ENCODE measurements at regions of chr17 and their contacts with region 1.

Region 1: DNA sequence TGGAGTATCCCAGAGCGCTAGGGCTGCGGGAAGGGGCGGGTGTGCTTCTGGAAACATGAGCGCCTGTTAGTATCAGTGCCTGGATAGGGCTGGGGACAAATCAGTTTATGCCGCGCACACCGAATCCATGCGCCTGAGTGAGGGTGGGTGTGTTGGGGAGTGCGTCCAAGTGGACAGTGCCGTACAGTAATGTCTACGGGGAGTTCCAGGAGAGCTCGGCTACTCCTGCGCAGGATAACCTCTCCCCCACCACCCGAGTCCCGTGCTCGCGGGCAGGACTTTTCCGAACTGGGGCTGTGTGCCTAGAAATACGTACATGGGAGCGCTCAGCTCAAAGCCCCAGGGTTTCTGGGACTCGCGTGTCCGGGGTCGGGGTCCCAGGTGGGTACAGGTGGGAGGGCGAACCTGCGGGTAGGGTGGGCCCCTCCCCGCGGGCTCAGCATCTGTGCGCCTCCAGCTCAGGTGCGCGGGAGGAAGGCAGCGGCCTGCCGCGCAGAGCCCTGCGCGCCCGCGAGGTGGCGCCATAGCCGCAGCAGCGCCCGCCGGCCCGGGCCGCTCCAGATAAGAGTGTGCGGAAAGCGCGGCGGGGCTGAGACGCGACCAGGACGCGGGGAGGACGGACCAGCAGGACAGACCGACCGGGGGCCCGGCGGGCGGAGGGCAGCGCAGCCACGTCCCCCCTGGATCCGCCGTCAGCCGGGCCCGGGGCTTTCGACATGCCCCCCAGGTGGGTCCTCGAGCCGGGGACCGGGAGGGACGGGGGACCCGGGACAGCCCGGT is at the start of gene HIC1:
- DNase-seq: peak; percentile 73
- ATAC-seq: peak; percentile 51
- H3K4me3 ChIP-seq: peak within 1 kb of the TSS; percentile 75
- H3K27ac ChIP-seq: peak within 1 kb of the TSS; percentile 98
- H3K4me1 ChIP-seq: peaks cover 18% of the 10 kb centered on the region
- H3K27me3 ChIP-seq: no peaks in the 10 kb centered on the region
- CTCF ChIP-seq: peak; percentile 93
- POLR2A ChIP-seq: peak; percentile 98
- RAD21 ChIP-seq: peak; percentile 89
- total RNA-seq, gene HIC1: 10.0 and 10.4 TPM in 2 replicates

Region 2: DNA sequence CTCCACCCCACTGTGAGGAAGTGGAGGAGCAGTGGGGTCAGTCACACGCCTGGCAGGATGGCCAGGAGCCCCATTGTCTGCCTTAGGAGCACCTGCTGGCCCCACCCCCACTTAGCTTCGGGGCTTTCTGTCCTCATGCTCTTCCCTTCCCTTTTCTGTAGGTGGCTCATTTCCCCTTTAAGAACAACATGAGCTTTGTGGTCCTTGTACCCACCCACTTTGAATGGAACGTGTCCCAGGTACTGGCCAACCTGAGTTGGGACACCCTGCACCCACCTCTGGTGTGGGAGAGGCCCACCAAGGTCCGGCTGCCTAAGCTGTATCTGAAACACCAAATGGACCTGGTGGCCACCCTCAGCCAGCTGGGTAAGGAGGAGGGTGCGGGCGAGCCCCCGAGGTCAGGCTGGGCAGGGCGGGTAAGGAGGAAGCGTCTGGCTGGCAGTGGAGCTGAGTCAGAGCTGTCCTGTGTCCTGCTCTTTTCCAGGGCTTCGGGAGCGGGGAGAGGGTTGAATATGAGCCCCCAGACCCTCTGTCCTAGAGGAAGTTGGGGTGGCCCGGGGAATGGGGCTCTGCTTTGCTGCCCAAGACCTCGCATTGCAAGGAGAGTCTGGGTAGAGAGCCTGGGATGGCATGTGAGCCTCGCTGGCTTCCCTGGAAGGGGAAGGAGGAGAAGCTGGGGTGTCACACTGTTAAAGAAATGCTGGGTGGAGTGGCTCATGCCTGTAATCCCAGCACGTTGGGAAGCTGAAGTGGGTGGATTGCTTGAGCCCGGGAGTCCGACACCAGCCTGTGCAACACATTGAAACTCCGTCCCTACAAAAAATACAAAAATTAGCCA is 302.1 kb before region 1 on chr17:
- CTCF ChIA-PET with region 1: no interaction called
- POLR2A ChIA-PET with region 1: no interaction called
- dilution Hi-C with region 1: no loop called
- in situ Hi-C with region 1: no loop called
- intact Hi-C with region 1: no loop called
- DNase-seq: no peak
- ATAC-seq: no peak
- H3K4me3 ChIP-seq: no peak overlapping the region
- H3K27ac ChIP-seq: no peak overlapping the region
- H3K4me1 ChIP-seq: no peaks in the 10 kb centered on the region
- H3K27me3 ChIP-seq: peaks cover 2% of the 10 kb centered on the region; the same call in 1 of the 2 replicates
- CTCF ChIP-seq: no peak
- POLR2A ChIP-seq: no peak
- RAD21 ChIP-seq: no peak

Region 3: GRCh38 chr17:2011411-2012371 is 43.0 kb before region 1 on chr17:
- CTCF ChIA-PET with region 1: no interaction called
- POLR2A ChIA-PET with region 1: no interaction called
- dilution Hi-C with region 1: no loop called
- in situ Hi-C with region 1: no loop called
- intact Hi-C with region 1: no loop called
- DNase-seq: no peak
- ATAC-seq: peak; percentile 80
- H3K4me3 ChIP-seq: no peak overlapping the region
- H3K27ac ChIP-seq: no peak overlapping the region
- H3K4me1 ChIP-seq: peaks cover 8% of the 10 kb centered on the region; the same call in 1 of the 2 replicates
- H3K27me3 ChIP-seq: peaks cover 23% of the 10 kb centered on the region
- CTCF ChIP-seq: no peak
- POLR2A ChIP-seq: no peak
- RAD21 ChIP-seq: no peak

Region 4: DNA sequence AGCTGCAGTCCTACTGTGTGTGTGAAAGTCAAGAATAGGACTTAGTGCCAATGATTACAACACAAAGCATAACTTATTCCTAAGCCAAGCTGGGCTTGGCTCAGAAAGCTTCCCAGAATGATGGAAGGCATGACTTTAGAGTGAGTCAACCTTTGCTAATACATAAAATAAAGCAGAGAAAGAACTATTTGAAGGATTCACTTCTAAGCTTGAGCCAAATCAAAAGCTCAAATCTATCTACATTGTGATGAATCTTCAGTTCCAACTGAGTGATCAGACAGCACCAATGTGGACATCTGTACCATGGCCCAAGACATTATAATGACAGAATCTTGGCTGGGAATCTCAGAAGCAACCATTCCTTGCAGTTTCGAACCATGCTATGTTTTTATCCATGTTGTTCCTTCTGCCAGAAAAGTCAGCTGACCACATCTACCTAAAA is 207.5 kb after region 1 on chr17:
- CTCF ChIA-PET with region 1: interaction called, 11 read pairs
- POLR2A ChIA-PET with region 1: no interaction called
- dilution Hi-C with region 1: no loop called
- in situ Hi-C with region 1: no loop called
- intact Hi-C with region 1: no loop called
- DNase-seq: peak; percentile 87
- ATAC-seq: peak; percentile 79
- H3K4me3 ChIP-seq: no peak overlapping the region
- H3K27ac ChIP-seq: no peak overlapping the region
- H3K4me1 ChIP-seq: peaks cover 10% of the 10 kb centered on the region
- H3K27me3 ChIP-seq: no peaks in the 10 kb centered on the region
- CTCF ChIP-seq: no peak
- POLR2A ChIP-seq: no peak
- RAD21 ChIP-seq: no peak

Region 5: GRCh38 chr17:2282297-2282873 is 227.7 kb after region 1 on chr17:
- CTCF ChIA-PET with region 1: interaction called, 6 read pairs
- POLR2A ChIA-PET with region 1: no interaction called
- dilution Hi-C with region 1: no loop called
- in situ Hi-C with region 1: no loop called
- intact Hi-C with region 1: loop called (anchors 1 kb)
- DNase-seq: peak; percentile 91
- ATAC-seq: peak; percentile 95
- H3K4me3 ChIP-seq: no peak overlapping the region
- H3K27ac ChIP-seq: 0 out of 2 replicates have a peak overlapping the region, but pooled peaks have one; percentile 7
- H3K4me1 ChIP-seq: peaks cover 7% of the 10 kb centered on the region
- H3K27me3 ChIP-seq: no peaks in the 10 kb centered on the region
- CTCF ChIP-seq: peak; percentile 66
- POLR2A ChIP-seq: no peak
- RAD21 ChIP-seq: peak; percentile 68

Region 6: GRCh38 chr17:2303204-2304188 is 248.8 kb after region 1 on chr17 and contains the starts of genes SMG6 and SRR:
- CTCF ChIA-PET with region 1: no interaction called
- POLR2A ChIA-PET with region 1: interaction called, 17 read pairs
- dilution Hi-C with region 1: no loop called
- in situ Hi-C with region 1: no loop called
- intact Hi-C with region 1: no loop called
- DNase-seq: peak; percentile 75
- ATAC-seq: peak; percentile 97
- H3K4me3 ChIP-seq: peak within 1 kb of the TSS; percentile 96
- H3K27ac ChIP-seq: peak within 1 kb of the TSS; percentile 97
- H3K4me1 ChIP-seq: no peaks in the 10 kb centered on the region
- H3K27me3 ChIP-seq: no peaks in the 10 kb centered on the region
- CTCF ChIP-seq: no peak
- POLR2A ChIP-seq: peak; percentile 74
- RAD21 ChIP-seq: no peak
- total RNA-seq, gene SMG6: 16.3 and 18.9 TPM in 2 replicates
- total RNA-seq, gene SRR: 38.0 and 52.7 TPM in 2 replicates

Region 7: GRCh38 chr17:2336215-2336851 is 281.6 kb after region 1 on chr17 and contains the start of gene TSR1:
- CTCF ChIA-PET with region 1: interaction called, 3 read pairs
- POLR2A ChIA-PET with region 1: no interaction called
- dilution Hi-C with region 1: no loop called
- in situ Hi-C with region 1: no loop called
- intact Hi-C with region 1: loop called (anchors 5 kb)
- DNase-seq: peak; percentile 88
- ATAC-seq: peak; percentile 81
- H3K4me3 ChIP-seq: peak within 1 kb of the TSS; percentile 65
- H3K27ac ChIP-seq: peak within 1 kb of the TSS; percentile 84
- H3K4me1 ChIP-seq: peaks cover 11% of the 10 kb centered on the region
- H3K27me3 ChIP-seq: no peaks in the 10 kb centered on the region
- CTCF ChIP-seq: peak; percentile 30; the same call in 1 of the 2 replicates
- POLR2A ChIP-seq: peak; percentile 79
- RAD21 ChIP-seq: peak; percentile 26; the same call in 1 of the 2 replicates
- total RNA-seq, gene TSR1: 72.6 and 79.2 TPM in 2 replicates

Region 8: GRCh38 chr17:2348308-2348685 is 293.6 kb after region 1 on chr17:
- CTCF ChIA-PET with region 1: no interaction called
- POLR2A ChIA-PET with region 1: no interaction called
- dilution Hi-C with region 1: no loop called
- in situ Hi-C with region 1: no loop called
- intact Hi-C with region 1: loop called (anchors 5 kb)
- DNase-seq: no peak
- ATAC-seq: no peak
- H3K4me3 ChIP-seq: no peak overlapping the region
- H3K27ac ChIP-seq: peak overlapping the region; percentile 4; the same call in 1 of the 2 replicates
- H3K4me1 ChIP-seq: peaks cover 9% of the 10 kb centered on the region
- H3K27me3 ChIP-seq: no peaks in the 10 kb centered on the region
- CTCF ChIP-seq: no peak
- POLR2A ChIP-seq: no peak
- RAD21 ChIP-seq: no peak